ENCODE measurements at regions of chr4 and their contacts with region 1.

Region 1: GRCh38 chr4:169612871-169613859 is 782 bp upstream of the NEK1 start:
- DNase-seq: no peak
- ATAC-seq: peak; percentile 67
- H3K4me3 ChIP-seq: peak overlapping the region; percentile 67
- H3K27ac ChIP-seq: peak overlapping the region; percentile 30; the same call in 1 of the 2 replicates
- H3K4me1 ChIP-seq: peaks cover 3% of the 10 kb centered on the region
- H3K27me3 ChIP-seq: no peaks in the 10 kb centered on the region
- CTCF ChIP-seq: peak; percentile 73 to 81 (median 74)
- EP300 ChIP-seq: no peak
- POLR2A ChIP-seq: no peak
- RAD21 ChIP-seq: peak; percentile 72

Region 2: GRCh38 chr4:169627307-169627706 is 14.1 kb after region 1 on chr4:
- CTCF ChIA-PET with region 1: interaction called, 27 read pairs
- POLR2A ChIA-PET with region 1: interaction called, 12 read pairs
- RAD21 ChIA-PET with region 1: interaction called, 3 read pairs
- SMC1A ChIA-PET with region 1: interaction called, 17 read pairs
- in situ Hi-C with region 1: no loop called
- intact Hi-C with region 1: no loop called
- DNase-seq: no peak
- ATAC-seq: peak; percentile 45
- H3K4me3 ChIP-seq: no peak overlapping the region
- H3K27ac ChIP-seq: no peak overlapping the region
- H3K4me1 ChIP-seq: no peaks in the 10 kb centered on the region
- H3K27me3 ChIP-seq: no peaks in the 10 kb centered on the region
- CTCF ChIP-seq: no peak
- EP300 ChIP-seq: no peak
- POLR2A ChIP-seq: no peak
- RAD21 ChIP-seq: no peak

Region 3: GRCh38 chr4:169659716-169660670 is 46.8 kb after region 1 on chr4:
- CTCF ChIA-PET with region 1: interaction called, 37 read pairs
- POLR2A ChIA-PET with region 1: interaction called, 9 read pairs
- RAD21 ChIA-PET with region 1: interaction called, 32 read pairs
- SMC1A ChIA-PET with region 1: interaction called, 25 read pairs
- in situ Hi-C with region 1: no loop called
- intact Hi-C with region 1: no loop called
- DNase-seq: peak; percentile 74
- ATAC-seq: peak; percentile 98
- H3K4me3 ChIP-seq: peak overlapping the region; percentile 56
- H3K27ac ChIP-seq: peak overlapping the region; percentile 78
- H3K4me1 ChIP-seq: peaks cover 3% of the 10 kb centered on the region
- H3K27me3 ChIP-seq: no peaks in the 10 kb centered on the region
- CTCF ChIP-seq: no peak
- EP300 ChIP-seq: no peak
- POLR2A ChIP-seq: 0 out of 2 replicates have a peak, but pooled peaks have one; percentile 36
- RAD21 ChIP-seq: no peak

Region 4: DNA sequence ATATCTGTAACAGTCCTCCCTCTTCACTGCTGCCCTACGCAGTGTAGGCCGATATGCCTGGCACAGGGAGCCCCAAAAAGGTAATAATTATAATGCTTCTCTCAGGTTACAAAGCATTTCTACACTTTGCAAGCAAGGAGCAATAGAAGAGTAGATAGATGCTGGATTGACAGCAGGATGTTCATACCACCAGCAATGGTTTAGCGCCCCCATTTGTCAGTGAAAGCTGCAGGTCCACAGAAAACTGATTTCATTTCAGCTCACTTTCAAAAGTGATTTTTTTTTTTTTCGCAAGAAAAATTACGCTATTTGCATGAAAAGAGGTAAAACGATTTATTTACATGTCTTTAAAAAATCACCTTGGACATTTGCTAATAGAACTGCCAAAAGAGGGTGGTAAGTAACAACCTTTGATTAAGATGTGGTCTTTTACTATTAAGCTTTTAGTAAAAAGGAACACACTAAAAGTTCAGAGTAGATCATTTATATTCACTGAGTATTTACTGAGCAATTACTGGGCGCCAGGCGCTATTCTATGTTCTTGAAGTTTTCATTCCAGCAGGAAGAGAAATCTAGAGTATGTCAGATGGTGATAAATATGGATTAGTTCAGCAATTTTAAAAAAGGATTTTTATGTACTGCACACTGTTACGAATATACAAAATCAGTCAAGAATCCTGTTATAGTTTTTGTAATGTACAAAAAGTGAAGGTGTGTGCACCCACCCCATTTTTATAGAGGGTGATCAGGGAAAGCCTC is 110.2 kb after region 1 on chr4:
- CTCF ChIA-PET with region 1: interaction called, 23 read pairs
- POLR2A ChIA-PET with region 1: no interaction called
- RAD21 ChIA-PET with region 1: interaction called, 12 read pairs
- SMC1A ChIA-PET with region 1: interaction called, 20 read pairs
- in situ Hi-C with region 1: no loop called
- intact Hi-C with region 1: loop called (anchors 2 kb)
- DNase-seq: no peak
- ATAC-seq: no peak
- H3K4me3 ChIP-seq: no peak overlapping the region
- H3K27ac ChIP-seq: no peak overlapping the region
- H3K4me1 ChIP-seq: no peaks in the 10 kb centered on the region
- H3K27me3 ChIP-seq: no peaks in the 10 kb centered on the region
- CTCF ChIP-seq: peak in 1 of 3 experiments; percentile 31; a peak in 1 of 6 replicates
- EP300 ChIP-seq: no peak
- POLR2A ChIP-seq: no peak
- RAD21 ChIP-seq: peak; percentile 19; the same call in 1 of the 2 replicates

Region 5: DNA sequence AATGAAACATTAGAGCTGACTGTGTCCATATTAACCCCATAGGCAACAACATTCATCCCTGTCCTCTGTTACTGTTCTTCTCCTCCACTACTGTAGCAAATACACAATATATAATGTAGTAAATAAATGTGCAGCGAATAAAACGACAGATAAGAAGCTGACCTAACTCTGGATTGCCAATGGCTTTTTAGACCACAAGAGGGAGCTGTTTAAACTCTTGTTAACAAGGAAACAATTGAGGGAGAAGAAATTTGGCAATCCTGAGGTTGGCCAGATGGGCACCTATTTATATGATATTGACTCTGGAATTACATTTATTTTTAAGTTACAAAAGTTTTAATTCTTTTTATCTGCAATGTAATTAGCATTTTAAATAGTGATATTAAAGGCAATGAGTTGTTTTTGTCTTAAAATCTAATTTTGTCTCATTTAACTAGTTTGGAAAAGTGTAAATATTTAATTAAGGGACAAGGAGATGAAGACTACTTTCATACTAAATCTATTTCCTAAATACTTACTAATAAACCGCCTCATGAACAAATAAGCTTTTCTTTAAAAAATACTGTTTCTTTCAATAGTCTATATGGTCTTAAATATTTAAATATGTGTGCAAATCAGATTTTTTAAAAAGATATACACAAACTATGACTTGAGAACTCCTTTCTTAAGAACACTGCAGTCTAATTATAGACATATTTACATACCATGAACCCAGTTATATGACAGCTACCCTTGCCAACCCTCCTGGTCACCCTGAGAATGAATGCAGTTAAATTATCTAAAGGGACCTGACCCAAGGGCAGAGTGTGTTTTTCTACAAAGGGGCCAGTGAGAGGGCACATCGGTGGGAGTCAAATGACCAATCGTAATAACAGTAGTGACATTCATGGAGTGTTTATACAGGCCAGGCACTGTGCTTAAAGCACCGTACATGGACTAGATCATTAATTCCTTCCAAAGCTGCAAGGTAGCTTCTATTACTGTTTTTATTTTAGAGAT is 197.5 kb after region 1 on chr4:
- CTCF ChIA-PET with region 1: interaction called, 44 read pairs
- POLR2A ChIA-PET with region 1: no interaction called
- RAD21 ChIA-PET with region 1: interaction called, 24 read pairs
- SMC1A ChIA-PET with region 1: interaction called, 22 read pairs
- in situ Hi-C with region 1: no loop called
- intact Hi-C with region 1: loop called (anchors 5 kb)
- DNase-seq: peak; percentile 8
- ATAC-seq: peak; percentile 77
- H3K4me3 ChIP-seq: no peak overlapping the region
- H3K27ac ChIP-seq: no peak overlapping the region
- H3K4me1 ChIP-seq: no peaks in the 10 kb centered on the region
- H3K27me3 ChIP-seq: no peaks in the 10 kb centered on the region
- CTCF ChIP-seq: peak; percentile 66 to 76 (median 67)
- EP300 ChIP-seq: no peak
- POLR2A ChIP-seq: no peak
- RAD21 ChIP-seq: peak; percentile 74

Region 6: GRCh38 chr4:169968999-169969398 is 355.8 kb after region 1 on chr4:
- CTCF ChIA-PET with region 1: no interaction called
- POLR2A ChIA-PET with region 1: no interaction called
- RAD21 ChIA-PET with region 1: no interaction called
- SMC1A ChIA-PET with region 1: no interaction called
- in situ Hi-C with region 1: no loop called
- intact Hi-C with region 1: no loop called
- DNase-seq: no peak
- ATAC-seq: peak; percentile 55
- H3K4me3 ChIP-seq: no peak overlapping the region
- H3K27ac ChIP-seq: no peak overlapping the region
- H3K4me1 ChIP-seq: no peaks in the 10 kb centered on the region
- H3K27me3 ChIP-seq: no peaks in the 10 kb centered on the region; a peak in 1 of 4 replicates
- CTCF ChIP-seq: no peak
- EP300 ChIP-seq: no peak
- POLR2A ChIP-seq: no peak
- RAD21 ChIP-seq: no peak

Region 7: GRCh38 chr4:170047771-170048354 is 434.7 kb after region 1 on chr4:
- CTCF ChIA-PET with region 1: interaction called, 23 read pairs
- POLR2A ChIA-PET with region 1: no interaction called
- RAD21 ChIA-PET with region 1: interaction called, 13 read pairs
- SMC1A ChIA-PET with region 1: interaction called, 15 read pairs
- in situ Hi-C with region 1: loop called (anchors 5 kb)
- intact Hi-C with region 1: loop called (anchors 2 kb)
- DNase-seq: no peak
- ATAC-seq: no peak; the same call in 2 of the 3 replicates
- H3K4me3 ChIP-seq: no peak overlapping the region
- H3K27ac ChIP-seq: no peak overlapping the region
- H3K4me1 ChIP-seq: no peaks in the 10 kb centered on the region
- H3K27me3 ChIP-seq: no peaks in the 10 kb centered on the region
- CTCF ChIP-seq: peak; percentile 63 to 79 (median 75)
- EP300 ChIP-seq: no peak
- POLR2A ChIP-seq: no peak
- RAD21 ChIP-seq: peak; percentile 88

Region 8: GRCh38 chr4:170089668-170090351 is 476.6 kb after region 1 on chr4 and contains the start of gene AADAT:
- CTCF ChIA-PET with region 1: no interaction called
- POLR2A ChIA-PET with region 1: no interaction called
- RAD21 ChIA-PET with region 1: no interaction called
- SMC1A ChIA-PET with region 1: no interaction called
- in situ Hi-C with region 1: no loop called
- intact Hi-C with region 1: no loop called
- DNase-seq: no peak
- ATAC-seq: peak; percentile 93
- H3K4me3 ChIP-seq: peak within 1 kb of the TSS; percentile 41; the same call in 1 of the 2 replicates
- H3K27ac ChIP-seq: no peak within 1 kb of the TSS
- H3K4me1 ChIP-seq: no peaks in the 10 kb centered on the region
- H3K27me3 ChIP-seq: peaks cover 3 to 5% of the 10 kb centered on the region in 2 experiments; a peak in 2 of 4 replicates
- CTCF ChIP-seq: peak; percentile 7 to 48 (median 44); a peak in 4 of 6 replicates
- EP300 ChIP-seq: no peak
- POLR2A ChIP-seq: no peak
- RAD21 ChIP-seq: 0 out of 2 replicates have a peak, but pooled peaks have one; percentile 15
- polyA plus RNA-seq, gene AADAT: not detected

Measured in GM12878 (cell line).